Colonic mucosa (tissue), 4 donors: ENCODE measurements at regions of chr2 and their contacts with region 1.

Region 1: GRCh38 chr2:216023055-216023648 is 9.8 kb upstream of the MREG start:
- DNase-seq: peak; percentile 58
- H3K4me3 ChIP-seq: no peak overlapping the region
- H3K27ac ChIP-seq: no peak overlapping the region
- H3K4me1 ChIP-seq: no peaks in the 10 kb centered on the region
- H3K27me3 ChIP-seq: no peaks in the 10 kb centered on the region
- CTCF ChIP-seq: peak; percentile 46

Region 2: GRCh38 chr2:215949991-215950404 is 73.2 kb before region 1 on chr2:
- intact Hi-C with region 1: loop called (anchors 5 kb)
- DNase-seq: no peak
- H3K4me3 ChIP-seq: no peak overlapping the region
- H3K27ac ChIP-seq: no peak overlapping the region
- H3K4me1 ChIP-seq: no peaks in the 10 kb centered on the region
- H3K27me3 ChIP-seq: no peaks in the 10 kb centered on the region
- CTCF ChIP-seq: peak; percentile 50

Region 3: DNA sequence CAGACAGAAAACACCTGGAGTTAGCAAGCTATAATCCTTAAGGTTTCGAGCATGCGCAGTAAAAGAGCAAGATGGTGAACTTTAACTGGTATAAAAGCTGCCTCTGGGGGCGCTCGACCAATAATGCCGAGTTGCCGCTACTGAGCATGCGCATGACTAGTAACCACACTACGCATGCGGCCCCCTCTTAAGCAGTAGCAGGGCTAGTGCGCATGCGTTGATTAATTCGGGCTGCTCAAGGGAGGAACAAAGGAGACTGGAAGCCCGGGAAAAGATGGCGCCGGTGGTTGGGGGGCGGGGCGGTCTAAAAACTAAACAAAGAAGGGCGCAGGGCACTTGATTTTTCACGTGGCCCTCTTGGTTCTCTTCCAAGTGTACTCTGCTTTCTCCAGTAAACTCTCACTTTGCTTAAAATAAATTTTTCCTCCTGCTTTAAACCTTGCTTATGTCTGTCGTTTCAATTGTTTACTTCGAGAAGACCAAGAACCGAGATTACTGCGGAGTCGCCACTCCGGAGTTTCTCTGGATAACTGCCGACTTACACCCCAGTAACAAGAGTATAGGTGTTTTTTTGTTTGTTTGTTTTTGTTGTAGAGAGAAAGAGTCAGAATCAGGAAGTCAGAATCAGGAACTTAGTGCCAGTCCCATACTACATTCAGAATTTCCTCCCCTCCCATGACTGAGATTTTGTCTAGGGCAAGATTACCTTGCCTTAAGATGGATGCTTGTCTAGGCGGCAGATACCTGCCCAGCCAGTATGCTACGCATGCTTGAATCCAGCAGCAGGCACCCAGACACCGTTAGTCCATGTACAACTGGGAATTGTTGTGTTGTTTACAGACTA is 91.8 kb after region 1 on chr2:
- intact Hi-C with region 1: no loop called
- DNase-seq: peak; percentile 99
- H3K4me3 ChIP-seq: peak overlapping the region; percentile 37
- H3K27ac ChIP-seq: peak overlapping the region; percentile 75
- H3K4me1 ChIP-seq: no peaks in the 10 kb centered on the region
- H3K27me3 ChIP-seq: no peaks in the 10 kb centered on the region
- CTCF ChIP-seq: peak; percentile 76